Heart right ventricle (tissue), 16 donors: ENCODE measurements at regions of chr14 and their contacts with region 1.

Region 1: GRCh38 chr14:57221931-57222330 is 46.8 kb downstream of the EXOC5 start:
- DNase-seq: no peak
- ATAC-seq: no peak
- H3K4me3 ChIP-seq: no peak overlapping the region
- H3K27ac ChIP-seq: no peak overlapping the region
- H3K4me1 ChIP-seq: no peaks in the 10 kb centered on the region
- H3K27me3 ChIP-seq: no peaks in the 10 kb centered on the region
- CTCF ChIP-seq: no peak

Region 2: DNA sequence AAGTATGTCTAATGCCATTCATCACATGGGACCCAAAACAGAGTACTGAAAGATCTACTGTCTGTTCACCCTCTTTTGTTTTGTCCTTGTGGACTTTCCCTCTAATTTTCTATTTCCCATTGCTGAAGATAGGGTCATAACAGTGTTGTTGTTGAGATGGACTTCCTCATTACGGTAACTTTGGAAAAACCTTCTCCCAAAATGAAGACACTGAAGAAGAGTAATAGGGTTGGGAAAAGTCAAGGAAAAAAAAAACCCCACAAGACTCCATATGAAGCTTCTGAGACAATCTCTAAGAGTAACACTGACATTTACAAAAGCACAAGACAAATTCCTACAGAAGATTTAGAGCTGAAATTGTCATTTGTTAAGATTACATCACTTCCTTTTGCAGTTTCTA is 10.1 kb after region 1 on chr14:
- intact Hi-C with region 1: loop called in 1 of 10 experiments (anchors 2 kb)
- DNase-seq: no peak
- ATAC-seq: no peak
- H3K4me3 ChIP-seq: no peak overlapping the region
- H3K27ac ChIP-seq: no peak overlapping the region
- H3K4me1 ChIP-seq: no peaks in the 10 kb centered on the region
- H3K27me3 ChIP-seq: no peaks in the 10 kb centered on the region
- CTCF ChIP-seq: no peak